Aorta (tissue), 5 donors: ENCODE measurements at regions of chr17 and their contacts with region 1.

Region 1: DNA sequence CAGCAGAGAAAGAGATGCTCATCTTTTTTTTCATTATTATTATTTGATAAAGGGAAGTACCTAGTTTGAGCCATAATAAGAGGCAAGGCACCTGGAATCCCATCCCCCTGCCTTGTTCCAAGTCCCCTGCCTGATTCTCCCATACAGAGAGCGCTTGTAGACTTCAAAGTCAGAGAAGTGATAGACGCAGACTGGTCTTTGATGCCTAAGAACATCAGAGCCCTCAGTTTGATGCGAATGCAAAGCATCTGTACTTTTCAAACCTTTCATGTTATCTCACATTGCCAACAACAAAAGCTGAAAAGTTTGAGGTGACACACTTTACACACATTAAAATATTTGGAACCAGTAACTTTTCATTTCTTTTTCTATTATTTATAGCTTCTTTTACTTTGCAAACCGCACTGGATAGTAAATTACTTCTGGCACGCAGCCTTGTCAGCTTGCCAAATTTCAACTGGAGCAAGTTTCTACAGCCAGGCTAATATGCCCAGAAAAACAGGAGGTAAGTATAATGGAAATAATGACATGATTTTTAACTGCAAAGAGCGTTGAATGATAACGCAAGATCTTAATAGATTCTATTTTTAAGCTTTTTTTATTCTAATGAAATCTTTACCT is 5.9 kb upstream of the UTP6 start:
- DNase-seq: peak in 1 of 2 donors; percentile 71
- ATAC-seq: no peak
- H3K4me3 ChIP-seq: no peak overlapping the region
- H3K27ac ChIP-seq: peak overlapping the region in 1 of 2 donors; percentile 33
- H3K4me1 ChIP-seq: peaks cover 0 to 2% of the 10 kb centered on the region in 2 donors
- H3K27me3 ChIP-seq: no peaks in the 10 kb centered on the region

Region 2: DNA sequence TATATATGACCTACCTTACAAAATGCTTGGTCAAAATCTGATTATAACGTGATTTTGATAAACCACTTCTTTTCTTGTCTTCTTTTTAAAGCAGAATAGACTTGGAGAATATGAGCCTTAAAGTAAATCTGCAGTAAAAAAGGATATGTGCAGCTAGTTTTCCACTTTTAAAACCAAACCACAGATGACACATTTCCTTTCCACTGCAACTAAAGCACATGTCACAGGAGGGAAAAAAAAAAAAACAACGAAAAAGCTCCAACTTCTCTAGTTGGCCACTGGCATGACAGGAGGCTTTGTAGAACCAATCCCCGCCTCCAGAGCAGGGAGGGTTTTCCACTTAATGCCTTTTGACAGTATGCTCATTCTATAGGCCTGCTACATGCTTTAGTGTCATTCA is 586.0 kb before region 1 on chr17 and contains the start of gene EVI2A:
- intact Hi-C with region 1: no loop called
- DNase-seq: peak in 1 of 2 donors; percentile 69
- ATAC-seq: peak; percentile 44
- H3K4me3 ChIP-seq: no peak within 1 kb of the TSS
- H3K27ac ChIP-seq: no peak within 1 kb of the TSS
- H3K4me1 ChIP-seq: no peaks in the 10 kb centered on the region
- H3K27me3 ChIP-seq: no peaks in the 10 kb centered on the region
- total RNA-seq, gene EVI2A: 9.2 to 15.5 TPM

Region 3: DNA sequence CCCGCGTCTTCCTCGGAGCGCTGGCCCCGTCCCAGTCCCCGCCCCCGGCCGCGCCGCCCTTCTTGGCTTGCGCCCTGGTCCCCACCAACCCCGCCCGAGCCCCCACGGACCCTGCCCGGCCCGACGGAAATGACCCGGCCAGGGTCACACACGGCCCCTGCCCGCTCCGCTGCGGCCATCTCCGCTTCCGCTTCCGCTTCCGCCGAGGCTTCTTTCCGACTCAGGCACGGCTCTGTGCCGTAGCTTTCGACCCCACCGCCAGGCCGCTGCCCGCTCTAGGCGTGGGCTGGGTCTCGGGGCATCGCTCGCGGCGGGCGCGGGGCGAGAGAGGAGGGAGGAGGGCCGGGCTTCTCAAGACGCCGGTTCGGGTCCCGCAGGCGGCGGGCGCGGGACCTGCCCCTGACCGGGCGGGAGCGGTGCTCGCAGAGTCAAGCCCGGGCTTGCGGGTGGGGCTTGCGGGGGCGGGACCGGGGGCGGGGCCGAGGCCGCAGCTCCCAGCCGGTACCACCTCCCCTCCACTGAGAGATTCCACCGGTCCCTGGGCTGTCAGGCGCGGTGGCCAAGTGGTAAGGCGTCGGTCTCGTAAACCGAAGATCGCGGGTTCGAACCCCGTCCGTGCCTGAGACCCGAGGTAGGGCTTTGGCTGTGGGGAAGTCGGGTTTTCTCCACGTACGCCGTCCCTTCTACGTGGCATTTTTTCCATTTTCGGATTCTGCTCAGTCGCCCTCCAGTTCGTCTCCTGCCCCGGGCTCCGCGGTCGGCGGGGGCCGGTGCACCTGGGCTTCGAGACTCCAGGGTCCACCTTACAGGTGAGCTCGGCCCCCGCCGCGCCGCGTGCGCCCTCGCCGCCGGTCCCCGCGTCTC is 357.7 kb before region 1 on chr17:
- intact Hi-C with region 1: loop called in 1 of 2 experiments (anchors 10 kb)
- DNase-seq: peak; percentile 95 to 98
- ATAC-seq: peak; percentile 96
- H3K4me3 ChIP-seq: peak overlapping the region; percentile 52 to 72
- H3K27ac ChIP-seq: peak overlapping the region in 1 of 2 donors; percentile 61
- H3K4me1 ChIP-seq: no peaks in the 10 kb centered on the region
- H3K27me3 ChIP-seq: no peaks in the 10 kb centered on the region